Prostate gland (tissue), 2 donors: ENCODE measurements at regions of chr7 and their contacts with region 1.

Region 1: GRCh38 chr7:50418086-50418515 is 32.0 kb downstream of the FIGNL1 start:
- DNase-seq: peak; percentile 53
- H3K4me3 ChIP-seq: no peak overlapping the region
- H3K27ac ChIP-seq: no peak overlapping the region
- H3K4me1 ChIP-seq: no peaks in the 10 kb centered on the region
- H3K27me3 ChIP-seq: no peaks in the 10 kb centered on the region
- CTCF ChIP-seq: peak; percentile 40 to 83 (median 64)
- POLR2A ChIP-seq: no peak

Region 2: DNA sequence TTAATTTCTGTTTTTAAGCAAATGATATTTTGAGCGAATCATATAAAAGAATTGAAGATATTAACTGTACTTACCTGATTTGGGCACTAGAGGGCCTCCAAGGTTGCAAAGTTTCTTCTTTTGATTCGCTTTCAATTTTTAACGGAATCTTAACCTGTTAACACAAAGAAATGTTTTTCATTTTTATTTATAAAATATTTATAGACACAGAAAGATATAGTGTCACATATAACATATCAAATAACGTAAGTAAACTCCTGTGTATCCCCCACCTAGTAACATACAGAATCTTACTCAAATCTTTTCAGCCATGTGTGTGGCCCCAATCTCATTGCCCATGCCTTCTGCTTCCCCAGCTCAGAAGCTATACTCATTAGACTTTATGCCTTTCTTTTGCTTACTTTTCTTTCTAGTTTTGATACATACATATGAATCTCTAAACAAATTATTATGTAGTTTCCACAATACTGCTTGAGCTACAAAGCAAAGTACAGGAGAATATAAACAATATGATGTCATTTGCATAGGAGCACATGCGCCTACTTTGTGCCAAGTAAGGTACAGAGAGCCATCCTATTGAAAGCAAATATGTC is 275.6 kb before region 1 on chr7:
- intact Hi-C with region 1: loop called (anchors 10 kb)
- DNase-seq: no peak
- H3K4me3 ChIP-seq: no peak overlapping the region
- H3K27ac ChIP-seq: no peak overlapping the region
- H3K4me1 ChIP-seq: no peaks in the 10 kb centered on the region
- H3K27me3 ChIP-seq: no peaks in the 10 kb centered on the region
- CTCF ChIP-seq: peak; percentile 20 to 71 (median 62)
- POLR2A ChIP-seq: no peak

Region 3: DNA sequence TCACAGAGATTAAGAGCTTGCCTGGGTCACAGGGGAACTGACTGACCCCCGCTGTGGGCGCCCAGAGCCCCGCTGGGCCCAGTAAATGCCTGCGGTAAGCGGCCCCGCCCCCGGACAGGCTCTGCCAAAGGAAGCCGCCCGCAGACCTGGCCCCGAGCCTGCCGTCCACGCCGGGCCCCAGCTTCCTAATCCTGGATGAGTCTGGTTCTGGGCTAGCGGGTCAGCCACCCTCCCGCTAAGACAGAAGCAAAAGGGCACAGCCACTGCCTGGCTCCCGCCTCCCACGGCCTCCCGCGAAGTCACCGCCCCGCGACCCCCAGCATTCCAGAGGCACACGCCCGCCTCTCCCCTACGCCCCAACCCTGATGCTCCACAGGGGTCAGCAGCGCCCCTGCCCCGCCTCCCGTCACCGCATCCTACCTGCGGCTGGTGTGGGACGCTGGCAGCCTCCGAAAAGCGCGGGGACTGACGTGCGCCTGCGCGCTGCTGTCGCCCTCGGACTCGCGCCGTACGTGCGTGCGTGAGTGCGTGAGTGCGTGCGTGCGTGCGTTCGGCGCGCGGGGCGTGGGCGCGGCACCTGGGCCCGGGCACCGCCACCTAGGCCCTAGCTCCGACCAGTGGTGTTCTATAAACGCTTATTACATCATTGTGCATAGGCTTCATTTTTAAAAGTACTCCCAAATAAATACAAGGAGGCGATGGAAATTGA is 31.9 kb after region 1 on chr7 and contains the start of gene FIGNL1:
- intact Hi-C with region 1: no loop called
- DNase-seq: peak; percentile 44
- H3K4me3 ChIP-seq: peak within 1 kb of the TSS; percentile 61 to 76
- H3K27ac ChIP-seq: peak within 1 kb of the TSS; percentile 66 to 74
- H3K4me1 ChIP-seq: no peaks in the 10 kb centered on the region
- H3K27me3 ChIP-seq: no peaks in the 10 kb centered on the region
- CTCF ChIP-seq: peak in 1 of 4 experiments; percentile 15
- POLR2A ChIP-seq: no peak
- total RNA-seq, gene FIGNL1: 7.2 to 14.3 TPM